ENCODE measurements at regions of chr19 and their contacts with region 1.

Region 1: DNA sequence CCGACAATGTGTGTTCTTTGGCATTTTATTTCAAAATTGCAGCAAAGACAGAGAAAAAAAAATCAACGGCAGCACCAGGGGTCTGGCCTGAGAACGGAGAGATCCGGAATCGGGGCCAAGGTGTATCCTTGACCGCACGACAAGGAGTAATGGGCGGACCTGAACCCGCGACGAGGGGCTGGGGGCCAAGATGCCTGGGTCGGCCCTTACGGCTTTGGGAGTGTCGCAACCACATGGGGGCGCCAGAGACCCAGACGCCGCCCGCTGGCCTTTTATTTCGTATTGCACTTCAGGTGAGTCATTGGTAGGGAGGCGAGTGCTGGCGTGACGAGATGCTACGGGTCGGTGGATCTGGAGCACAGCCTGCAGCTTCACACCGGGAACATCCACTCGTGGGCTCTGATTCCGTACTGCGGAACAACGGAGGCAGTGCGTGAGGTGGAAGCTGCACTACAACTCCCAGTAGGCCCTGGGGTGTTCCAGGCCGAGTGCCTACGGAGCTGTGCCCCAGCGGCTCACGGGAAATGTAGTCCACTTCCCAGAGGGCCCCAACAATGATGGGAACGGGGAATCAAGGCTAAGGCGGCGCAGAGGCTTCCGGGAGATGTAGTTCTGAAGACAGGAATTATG is 15.7 kb downstream of the BCAT2 start:
- DNase-seq: peak; percentile 95 to 97
- H3K4me3 ChIP-seq: peak overlapping the region; percentile 36 to 45
- H3K27ac ChIP-seq: peak overlapping the region; percentile 80 to 86
- H3K4me1 ChIP-seq: peaks cover 0 to 23% (median 17%) of the 10 kb centered on the region in 4 donors
- H3K27me3 ChIP-seq: no peaks in the 10 kb centered on the region
- CTCF ChIP-seq: peak; percentile 92 to 98

Region 2: GRCh38 chr19:48405850-48406249 is 389.3 kb before region 1 on chr19:
- intact Hi-C with region 1: loop called (anchors 5 kb)
- DNase-seq: no peak
- H3K4me3 ChIP-seq: no peak overlapping the region
- H3K27ac ChIP-seq: no peak overlapping the region
- H3K4me1 ChIP-seq: no peaks in the 10 kb centered on the region
- H3K27me3 ChIP-seq: peaks cover 0 to 37% of the 10 kb centered on the region in 2 donors
- CTCF ChIP-seq: no peak

Region 3: DNA sequence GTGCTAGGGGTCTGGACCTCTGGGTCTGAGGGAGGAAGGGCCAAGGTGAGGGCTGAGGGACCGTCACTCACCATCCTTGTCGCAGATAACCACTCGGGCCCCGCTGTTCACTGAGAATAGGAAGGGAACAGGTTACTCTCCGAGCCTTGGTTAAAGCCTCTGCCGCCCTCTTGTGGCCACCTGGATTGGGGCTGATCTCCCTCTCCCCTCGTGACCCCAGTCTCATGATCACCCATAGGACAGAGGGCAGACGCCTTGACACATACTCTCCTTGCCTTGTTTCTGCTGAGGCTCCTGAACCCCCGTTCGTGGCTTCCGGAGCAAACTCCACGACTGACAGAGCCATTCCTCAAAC is 40.5 kb after region 1 on chr19:
- intact Hi-C with region 1: loop called (anchors 2 kb)
- DNase-seq: peak; percentile 97 to 98
- H3K4me3 ChIP-seq: peak overlapping the region; percentile 44 to 59
- H3K27ac ChIP-seq: peak overlapping the region; percentile 83 to 85
- H3K4me1 ChIP-seq: peaks cover 0 to 24% (median 13%) of the 10 kb centered on the region in 4 donors
- H3K27me3 ChIP-seq: no peaks in the 10 kb centered on the region
- CTCF ChIP-seq: peak; percentile 88 to 98

Region 4: GRCh38 chr19:48970923-48971395 is 175.8 kb after region 1 on chr19:
- intact Hi-C with region 1: loop called (anchors 5 kb)
- DNase-seq: peak; percentile 70 to 85
- H3K4me3 ChIP-seq: no peak overlapping the region
- H3K27ac ChIP-seq: peak overlapping the region in 1 of 2 donors; percentile 29
- H3K4me1 ChIP-seq: peaks cover 0 to 37% (median 28%) of the 10 kb centered on the region in 4 donors
- H3K27me3 ChIP-seq: no peaks in the 10 kb centered on the region
- CTCF ChIP-seq: peak; percentile 89 to 91